Common myeloid progenitor, CD34-positive (primary cell): ENCODE measurements at regions of chr21 and their contacts with region 1.

Region 1: GRCh38 chr21:15472108-15473040 is 257.4 kb upstream of the USP25 start:
- DNase-seq: no peak
- H3K4me3 ChIP-seq: no peak overlapping the region
- H3K27ac ChIP-seq: no peak overlapping the region
- H3K4me1 ChIP-seq: peaks cover 0 to 8% (median 4%) of the 10 kb centered on the region in 4 experiments
- H3K27me3 ChIP-seq: no peaks in the 10 kb centered on the region

Region 2: DNA sequence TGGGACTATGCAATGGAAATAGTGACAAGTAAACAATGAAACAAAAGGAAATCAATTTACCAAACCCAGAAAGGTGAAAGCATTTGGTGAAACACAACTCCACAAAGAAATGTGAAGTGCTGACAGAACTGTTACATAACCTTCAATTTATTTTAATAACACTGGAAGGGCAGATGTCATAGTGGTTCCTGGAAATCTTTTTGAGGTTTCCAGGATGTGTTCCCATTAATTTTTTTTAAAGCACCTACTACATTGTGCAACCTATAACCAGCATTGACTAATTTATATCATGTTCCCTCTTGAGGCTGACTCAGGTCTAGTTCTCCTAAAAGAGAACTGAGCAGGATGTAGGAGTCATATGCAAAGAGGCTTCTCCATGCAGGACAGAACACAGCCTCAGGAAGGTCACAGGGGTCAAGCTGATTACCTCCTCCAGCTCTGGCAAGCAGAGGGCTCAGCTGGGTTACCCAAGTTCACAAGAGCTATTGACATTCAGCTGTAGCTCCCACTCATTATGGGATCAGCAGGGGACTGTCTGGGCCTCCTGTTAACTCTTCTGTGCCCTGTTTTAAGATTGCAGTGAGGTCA is 250.5 kb before region 1 on chr21:
- CTCF ChIA-PET with region 1: no interaction called
- POLR2A ChIA-PET with region 1: no interaction called
- DNase-seq: peak in 2 of 3 donors; percentile 23 to 35
- H3K4me3 ChIP-seq: no peak overlapping the region
- H3K27ac ChIP-seq: no peak overlapping the region
- H3K4me1 ChIP-seq: peaks cover 12 to 28% (median 23%) of the 10 kb centered on the region in 4 experiments
- H3K27me3 ChIP-seq: no peaks in the 10 kb centered on the region

Region 3: DNA sequence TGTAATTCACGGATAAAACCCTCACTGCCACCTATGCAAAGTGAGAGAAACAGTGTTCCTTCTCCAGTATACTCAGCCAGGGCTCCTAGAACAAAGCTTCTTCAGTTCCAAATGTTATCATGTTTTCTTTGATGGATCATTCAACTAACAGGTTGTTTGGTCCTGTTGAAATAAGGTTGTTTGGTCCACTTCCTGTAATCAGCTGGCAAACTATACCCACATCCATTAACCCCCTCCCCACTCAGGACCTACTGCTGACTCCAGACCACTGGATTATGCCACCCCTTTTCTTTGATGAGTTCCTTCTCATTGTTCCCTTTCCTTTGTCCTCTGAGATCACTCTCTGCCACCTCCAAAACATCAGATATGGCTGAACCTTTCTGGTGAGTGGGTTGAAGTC is 10.3 kb before region 1 on chr21:
- CTCF ChIA-PET with region 1: no interaction called
- POLR2A ChIA-PET with region 1: no interaction called
- DNase-seq: no peak
- H3K4me3 ChIP-seq: no peak overlapping the region
- H3K27ac ChIP-seq: no peak overlapping the region
- H3K4me1 ChIP-seq: no peaks in the 10 kb centered on the region
- H3K27me3 ChIP-seq: no peaks in the 10 kb centered on the region

Region 4: DNA sequence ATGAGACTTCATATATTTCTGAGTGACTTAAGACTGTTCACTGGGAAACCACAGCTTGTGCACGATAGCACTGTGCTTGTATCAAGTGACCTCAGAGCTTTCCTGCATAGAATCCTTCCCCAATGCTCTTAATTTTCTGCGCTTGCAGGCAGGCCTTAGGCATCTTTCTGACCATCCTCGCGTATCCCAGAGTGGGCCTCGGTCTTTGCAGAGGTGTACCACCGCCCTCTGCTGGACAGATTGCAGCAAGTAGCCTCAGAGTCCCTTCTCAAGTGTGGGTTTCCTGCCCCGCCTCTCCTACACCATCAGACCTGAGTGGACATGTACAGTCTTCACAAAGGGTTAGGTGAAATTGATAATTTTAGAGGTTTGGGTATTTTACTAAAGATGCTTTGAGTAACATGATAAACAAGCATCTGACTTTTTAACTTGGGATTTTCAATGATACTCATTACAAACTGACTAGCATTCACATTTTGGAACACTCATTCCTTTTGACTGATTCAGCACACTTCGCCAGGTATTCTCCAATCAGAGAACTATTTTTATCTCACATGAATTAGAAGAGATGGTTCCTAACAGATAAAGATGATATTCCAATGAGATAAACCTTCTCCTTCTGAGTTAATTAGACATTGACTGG is 10.9 kb after region 1 on chr21:
- CTCF ChIA-PET with region 1: interaction called, 10 read pairs
- POLR2A ChIA-PET with region 1: no interaction called
- DNase-seq: peak; percentile 94 to 96 (median 95)
- H3K4me3 ChIP-seq: peak overlapping the region in 3 of 7 experiments; percentile 16 to 48 (median 20)
- H3K27ac ChIP-seq: peak overlapping the region in 1 of 2 experiments; percentile 57
- H3K4me1 ChIP-seq: peaks cover 16 to 62% (median 24%) of the 10 kb centered on the region in 4 experiments
- H3K27me3 ChIP-seq: no peaks in the 10 kb centered on the region

Region 5: GRCh38 chr21:15631366-15631765 is 159.0 kb after region 1 on chr21:
- CTCF ChIA-PET with region 1: no interaction called
- POLR2A ChIA-PET with region 1: no interaction called
- DNase-seq: peak in 2 of 3 donors; percentile 35 to 50
- H3K4me3 ChIP-seq: no peak overlapping the region
- H3K27ac ChIP-seq: no peak overlapping the region
- H3K4me1 ChIP-seq: no peaks in the 10 kb centered on the region
- H3K27me3 ChIP-seq: no peaks in the 10 kb centered on the region